H1 (cell line): ENCODE measurements at regions of chr19 and their contacts with region 1.

Region 1: GRCh38 chr19:19098703-19099632 is 35.2 kb downstream of the SLC25A42 start:
- DNase-seq: no peak
- H3K4me3 ChIP-seq: no peak overlapping the region
- H3K27ac ChIP-seq: no peak overlapping the region
- H3K4me1 ChIP-seq: no peaks in the 10 kb centered on the region; a peak in 2 of 7 replicates
- H3K27me3 ChIP-seq: no peaks in the 10 kb centered on the region; a peak in 2 of 7 replicates
- CTCF ChIP-seq: no peak
- EP300 ChIP-seq: no peak
- POLR2A ChIP-seq: no peak
- RAD21 ChIP-seq: no peak

Region 2: GRCh38 chr19:19110410-19111135 is 11.6 kb after region 1 on chr19:
- CTCF ChIA-PET with region 1: interaction called, 11 read pairs
- POLR2A ChIA-PET with region 1: interaction called, 16 read pairs
- DNase-seq: no peak
- H3K4me3 ChIP-seq: 0 out of 8 replicates have a peak overlapping the region, but pooled peaks of 1 of the 4 experiments have one; percentile 0
- H3K27ac ChIP-seq: no peak overlapping the region
- H3K4me1 ChIP-seq: peaks cover 3 to 7% (median 4%) of the 10 kb centered on the region in 4 experiments
- H3K27me3 ChIP-seq: 0 out of 7 replicates have a peak, but pooled peaks cover 0 to 2% (median 0%) of the 10 kb centered on the region in 4 experiments
- CTCF ChIP-seq: peak; percentile 13 to 26 (median 26); a peak in 3 of 4 replicates
- EP300 ChIP-seq: no peak
- POLR2A ChIP-seq: no peak
- RAD21 ChIP-seq: peak in 1 of 2 experiments; percentile 32; a peak in 1 of 4 replicates